ENCODE measurements at regions of chr6 and their contacts with region 1.

Region 1: GRCh38 chr6:34887753-34888513 is at the start of gene TAF11:
- DNase-seq: peak; percentile 86
- H3K4me3 Mint-ChIP-seq: peak within 1 kb of the TSS; percentile 98
- H3K27ac Mint-ChIP-seq: peak within 1 kb of the TSS; percentile 96
- H3K4me1 Mint-ChIP-seq: peaks cover 28% of the 10 kb centered on the region
- H3K27me3 Mint-ChIP-seq: peaks cover 3% of the 10 kb centered on the region
- total RNA-seq, gene TAF11: 37.2 and 38.4 TPM in 2 replicates

Region 2: DNA sequence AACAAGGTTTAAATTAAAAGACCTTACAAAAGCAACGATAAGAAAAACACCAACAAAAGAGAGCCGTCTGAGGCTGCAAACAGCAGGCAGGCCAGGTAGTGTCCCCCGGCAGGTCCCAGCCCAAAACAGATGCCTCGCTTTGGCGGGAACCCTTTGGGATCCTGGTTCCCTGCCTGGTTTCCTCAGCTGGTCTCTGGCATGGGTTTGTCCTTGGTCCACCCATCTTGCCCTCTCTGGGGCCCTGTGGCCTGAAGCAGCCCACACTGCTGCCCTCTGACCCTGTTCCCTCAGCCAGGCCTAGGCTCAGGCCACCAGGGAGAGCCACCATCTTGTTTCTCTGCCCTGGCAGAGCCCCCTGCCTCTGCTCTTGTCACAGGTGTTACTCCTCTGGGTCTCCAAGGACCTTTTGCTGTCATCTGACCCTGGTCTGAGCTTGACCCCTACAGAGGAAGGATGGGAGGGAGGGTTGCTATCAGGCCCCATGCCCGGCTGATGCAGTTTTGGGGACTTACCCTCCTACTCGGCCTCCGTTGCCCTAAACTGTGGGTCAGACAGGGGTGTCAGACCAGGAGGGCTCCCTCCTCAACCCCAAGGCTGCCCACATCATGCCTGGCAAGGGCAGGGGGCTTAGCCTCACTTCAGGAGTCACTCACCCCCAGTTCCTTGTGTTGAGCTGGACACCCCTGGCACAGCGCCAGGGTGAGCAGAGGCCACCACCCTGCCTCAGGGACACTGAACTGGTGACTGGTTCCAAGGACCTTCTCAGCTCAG is 711.5 kb before region 1 on chr6:
- intact Hi-C with region 1: no loop called
- DNase-seq: no peak
- H3K4me3 Mint-ChIP-seq: no peak overlapping the region
- H3K27ac Mint-ChIP-seq: no peak overlapping the region
- H3K4me1 Mint-ChIP-seq: no peaks in the 10 kb centered on the region
- H3K27me3 Mint-ChIP-seq: peaks cover 3% of the 10 kb centered on the region

Region 3: GRCh38 chr6:34656378-34657036 is 231.4 kb before region 1 on chr6:
- intact Hi-C with region 1: loop called (anchors 5 kb)
- DNase-seq: no peak
- H3K4me3 Mint-ChIP-seq: peak overlapping the region; percentile 79
- H3K27ac Mint-ChIP-seq: peak overlapping the region; percentile 97
- H3K4me1 Mint-ChIP-seq: peaks cover 41% of the 10 kb centered on the region
- H3K27me3 Mint-ChIP-seq: no peaks in the 10 kb centered on the region

Region 4: GRCh38 chr6:34757687-34758274 is 130.2 kb before region 1 on chr6:
- intact Hi-C with region 1: loop called (anchors 1 kb)
- DNase-seq: no peak
- H3K4me3 Mint-ChIP-seq: no peak overlapping the region
- H3K27ac Mint-ChIP-seq: no peak overlapping the region
- H3K4me1 Mint-ChIP-seq: peaks cover 7% of the 10 kb centered on the region
- H3K27me3 Mint-ChIP-seq: no peaks in the 10 kb centered on the region

Region 5: DNA sequence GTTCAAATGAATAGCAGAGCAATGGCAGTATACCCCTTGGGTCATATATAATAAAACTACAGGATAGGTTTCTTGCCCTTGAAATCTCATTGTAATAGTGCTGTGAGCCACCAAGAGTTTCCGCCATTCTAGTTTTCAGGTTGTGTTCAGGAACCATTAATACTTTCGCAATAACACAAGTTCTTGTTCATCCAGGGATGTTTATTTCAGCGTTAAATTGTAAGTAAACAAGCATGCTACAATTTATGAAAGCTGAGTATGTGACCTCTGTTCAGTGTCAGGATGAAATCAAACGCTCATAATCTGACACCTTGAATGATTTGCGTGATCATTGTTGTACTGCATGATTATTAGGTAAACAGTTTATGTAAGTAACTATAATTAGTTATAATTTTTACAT is 23.9 kb after region 1 on chr6:
- intact Hi-C with region 1: loop called (anchors 1 kb)
- DNase-seq: no peak
- H3K4me3 Mint-ChIP-seq: no peak overlapping the region
- H3K27ac Mint-ChIP-seq: no peak overlapping the region
- H3K4me1 Mint-ChIP-seq: peaks cover 32% of the 10 kb centered on the region
- H3K27me3 Mint-ChIP-seq: peaks cover 38% of the 10 kb centered on the region

Region 6: GRCh38 chr6:35240840-35241801 is 353.2 kb after region 1 on chr6:
- intact Hi-C with region 1: loop called (anchors 10 kb)
- DNase-seq: peak; percentile 61
- H3K4me3 Mint-ChIP-seq: no peak overlapping the region
- H3K27ac Mint-ChIP-seq: no peak overlapping the region
- H3K4me1 Mint-ChIP-seq: peaks cover 7% of the 10 kb centered on the region
- H3K27me3 Mint-ChIP-seq: peaks cover 3% of the 10 kb centered on the region

Region 7: DNA sequence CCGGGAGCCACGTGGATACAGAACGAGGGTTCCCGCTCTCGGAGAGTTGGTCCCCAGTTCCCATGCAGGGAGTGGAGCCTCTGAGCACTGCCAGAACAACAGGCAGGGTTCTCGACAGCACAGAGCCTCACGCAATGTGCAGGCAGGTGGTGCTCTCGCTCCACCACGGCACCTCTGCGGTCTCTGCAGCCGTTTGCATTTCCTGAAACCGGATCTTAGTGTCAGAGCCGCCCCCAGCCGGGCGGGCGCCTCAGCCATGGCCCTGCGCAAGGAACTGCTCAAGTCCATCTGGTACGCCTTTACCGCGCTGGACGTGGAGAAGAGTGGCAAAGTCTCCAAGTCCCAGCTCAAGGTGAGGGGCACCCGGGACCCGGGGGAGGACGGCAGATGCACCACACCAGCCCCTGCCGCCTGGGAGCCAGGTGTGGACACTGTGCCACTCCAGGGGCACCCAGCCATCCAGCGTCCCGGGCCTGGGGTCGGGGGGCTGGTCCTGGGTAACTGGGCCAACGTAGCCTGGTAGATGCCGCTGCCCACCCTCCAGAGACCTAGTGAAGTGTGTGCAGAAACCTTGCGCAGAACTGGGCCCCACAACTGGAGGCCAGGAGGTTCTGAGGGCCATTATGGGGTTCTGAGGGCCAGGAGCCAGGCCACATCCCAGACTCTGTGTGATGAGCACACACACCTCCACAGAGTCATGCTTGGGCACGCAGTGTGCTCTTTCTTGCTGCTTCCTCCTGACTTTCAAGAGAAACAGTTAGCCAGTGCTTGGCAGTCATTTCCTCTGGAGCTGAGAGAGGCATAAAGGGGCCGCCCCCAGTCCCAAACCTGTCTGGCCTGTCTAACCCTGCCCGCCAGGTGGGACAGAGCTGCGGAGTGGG is 409.9 kb after region 1 on chr6 and contains the start of gene DEF6:
- intact Hi-C with region 1: loop called (anchors 5 kb)
- DNase-seq: peak; percentile 85
- H3K4me3 Mint-ChIP-seq: peak within 1 kb of the TSS; percentile 88
- H3K27ac Mint-ChIP-seq: peak within 1 kb of the TSS; percentile 98
- H3K4me1 Mint-ChIP-seq: peaks cover 48% of the 10 kb centered on the region
- H3K27me3 Mint-ChIP-seq: no peaks in the 10 kb centered on the region
- total RNA-seq, gene DEF6: 123 and 125 TPM in 2 replicates

Measured in activated T-helper 1 cell treated with anti-CD3 and anti-CD28 coated beads, Interleukin-12 subunit alpha, Interleukin-12 subunit beta, Interleukin-2, Interleukin-4 antibody, amounts not matched to agents 30 ng/mL and 10 ng/mL and 1 ng/mL, durations not matched to agents 14 hours and 24 hours and 36 hours (primary cell).